ENCODE measurements at regions of chr9 and their contacts with region 1.

Region 1: GRCh38 chr9:127396808-127397497 is at the start of gene SLC2A8:
- DNase-seq: peak; percentile 100
- ATAC-seq: peak; percentile 91
- H3K4me3 ChIP-seq: peak within 1 kb of the TSS; percentile 26 to 77 (median 57)
- H3K4me3 Mint-ChIP-seq: peak within 1 kb of the TSS; percentile 86
- H3K27ac ChIP-seq: peak within 1 kb of the TSS in 1 of 2 donors; percentile 74
- H3K27ac Mint-ChIP-seq: peak within 1 kb of the TSS; percentile 79
- H3K4me1 ChIP-seq: peaks cover 4 to 16% of the 10 kb centered on the region in 2 donors
- H3K4me1 Mint-ChIP-seq: peaks cover 14% of the 10 kb centered on the region
- H3K27me3 ChIP-seq: peaks cover 0 to 7% (median 2%) of the 10 kb centered on the region in 4 experiments
- H3K27me3 Mint-ChIP-seq: no peaks in the 10 kb centered on the region
- CTCF ChIP-seq: peak; percentile 34
- total RNA-seq, gene SLC2A8: 14.2 and 18.7 TPM in 2 replicates

Region 2: GRCh38 chr9:127214421-127215267 is 182.3 kb before region 1 on chr9:
- CTCF ChIA-PET with region 1: interaction called, 16 read pairs
- POLR2A ChIA-PET with region 1: no interaction called
- intact Hi-C with region 1: loop called (anchors 1 kb)
- DNase-seq: peak; percentile 73
- ATAC-seq: peak; percentile 85
- H3K4me3 ChIP-seq: no peak overlapping the region
- H3K4me3 Mint-ChIP-seq: no peak overlapping the region
- H3K27ac ChIP-seq: no peak overlapping the region
- H3K27ac Mint-ChIP-seq: no peak overlapping the region
- H3K4me1 ChIP-seq: peaks cover 0 to 3% of the 10 kb centered on the region in 2 donors
- H3K4me1 Mint-ChIP-seq: peaks cover 4% of the 10 kb centered on the region
- H3K27me3 ChIP-seq: no peaks in the 10 kb centered on the region
- H3K27me3 Mint-ChIP-seq: no peaks in the 10 kb centered on the region
- CTCF ChIP-seq: peak; percentile 85

Region 3: GRCh38 chr9:127244609-127245601 is 152.0 kb before region 1 on chr9:
- CTCF ChIA-PET with region 1: interaction called, 6 read pairs
- POLR2A ChIA-PET with region 1: no interaction called
- intact Hi-C with region 1: loop called (anchors 1 kb)
- DNase-seq: peak; percentile 93
- ATAC-seq: peak; percentile 100
- H3K4me3 ChIP-seq: peak overlapping the region; percentile 50 to 77 (median 66)
- H3K4me3 Mint-ChIP-seq: peak overlapping the region; percentile 94
- H3K27ac ChIP-seq: peak overlapping the region in 1 of 2 donors; percentile 18
- H3K27ac Mint-ChIP-seq: peak overlapping the region; percentile 86
- H3K4me1 ChIP-seq: peaks cover 5 to 11% of the 10 kb centered on the region in 2 donors
- H3K4me1 Mint-ChIP-seq: peaks cover 11% of the 10 kb centered on the region
- H3K27me3 ChIP-seq: peaks cover 0 to 3% (median 0%) of the 10 kb centered on the region in 4 experiments
- H3K27me3 Mint-ChIP-seq: no peaks in the 10 kb centered on the region
- CTCF ChIP-seq: no peak

Region 4: DNA sequence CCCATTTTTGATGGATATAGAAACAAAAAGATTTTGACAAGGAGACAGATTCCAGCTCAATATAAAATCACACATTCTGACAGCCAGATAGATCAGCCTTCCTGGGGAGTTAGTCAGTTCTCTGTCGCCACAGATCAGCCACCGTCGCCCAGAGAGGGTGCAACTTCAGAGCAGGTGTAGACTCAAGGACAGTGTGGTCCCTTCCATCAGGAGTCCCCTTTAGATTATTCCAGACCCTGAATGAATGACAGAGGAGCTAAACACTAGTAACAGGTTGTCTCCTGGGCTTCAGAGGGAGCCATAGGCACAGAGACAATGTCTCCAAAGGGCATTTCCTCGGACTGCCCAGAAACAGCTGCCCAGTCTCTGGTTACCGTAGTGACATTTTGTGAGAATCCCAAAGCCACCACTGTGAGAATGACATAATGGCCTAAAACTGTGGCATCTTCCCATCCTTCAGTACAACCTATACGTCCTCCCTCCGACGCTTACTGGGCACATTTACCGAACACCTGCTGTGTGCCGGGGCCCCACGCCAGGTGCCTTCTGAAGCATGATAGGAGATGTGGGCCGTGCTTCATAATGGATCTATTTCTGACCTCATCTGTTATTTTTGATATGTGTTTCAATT is 47.4 kb before region 1 on chr9:
- CTCF ChIA-PET with region 1: no interaction called
- POLR2A ChIA-PET with region 1: no interaction called
- intact Hi-C with region 1: no loop called
- DNase-seq: no peak
- ATAC-seq: no peak
- H3K4me3 ChIP-seq: no peak overlapping the region
- H3K4me3 Mint-ChIP-seq: no peak overlapping the region
- H3K27ac ChIP-seq: no peak overlapping the region
- H3K27ac Mint-ChIP-seq: no peak overlapping the region
- H3K4me1 ChIP-seq: no peaks in the 10 kb centered on the region
- H3K4me1 Mint-ChIP-seq: no peaks in the 10 kb centered on the region
- H3K27me3 ChIP-seq: peaks cover 0 to 5% (median 0%) of the 10 kb centered on the region in 4 experiments
- H3K27me3 Mint-ChIP-seq: no peaks in the 10 kb centered on the region
- CTCF ChIP-seq: no peak

Region 5: GRCh38 chr9:127611899-127612790 is 215.2 kb after region 1 on chr9 and contains the start of gene STXBP1:
- CTCF ChIA-PET with region 1: no interaction called
- POLR2A ChIA-PET with region 1: no interaction called
- intact Hi-C with region 1: loop called (anchors 2 kb)
- DNase-seq: peak; percentile 91
- ATAC-seq: peak; percentile 94
- H3K4me3 ChIP-seq: peak within 1 kb of the TSS; percentile 55 to 84 (median 60)
- H3K4me3 Mint-ChIP-seq: peak within 1 kb of the TSS; percentile 98
- H3K27ac ChIP-seq: no peak within 1 kb of the TSS
- H3K27ac Mint-ChIP-seq: peak within 1 kb of the TSS; percentile 80
- H3K4me1 ChIP-seq: peaks cover 28 to 31% of the 10 kb centered on the region in 2 donors
- H3K4me1 Mint-ChIP-seq: peaks cover 25% of the 10 kb centered on the region
- H3K27me3 ChIP-seq: peaks cover 0 to 39% (median 33%) of the 10 kb centered on the region in 4 experiments
- H3K27me3 Mint-ChIP-seq: peaks cover 44% of the 10 kb centered on the region
- CTCF ChIP-seq: no peak
- total RNA-seq, gene STXBP1: 0.62 and 0.78 TPM in 2 replicates

Region 6: DNA sequence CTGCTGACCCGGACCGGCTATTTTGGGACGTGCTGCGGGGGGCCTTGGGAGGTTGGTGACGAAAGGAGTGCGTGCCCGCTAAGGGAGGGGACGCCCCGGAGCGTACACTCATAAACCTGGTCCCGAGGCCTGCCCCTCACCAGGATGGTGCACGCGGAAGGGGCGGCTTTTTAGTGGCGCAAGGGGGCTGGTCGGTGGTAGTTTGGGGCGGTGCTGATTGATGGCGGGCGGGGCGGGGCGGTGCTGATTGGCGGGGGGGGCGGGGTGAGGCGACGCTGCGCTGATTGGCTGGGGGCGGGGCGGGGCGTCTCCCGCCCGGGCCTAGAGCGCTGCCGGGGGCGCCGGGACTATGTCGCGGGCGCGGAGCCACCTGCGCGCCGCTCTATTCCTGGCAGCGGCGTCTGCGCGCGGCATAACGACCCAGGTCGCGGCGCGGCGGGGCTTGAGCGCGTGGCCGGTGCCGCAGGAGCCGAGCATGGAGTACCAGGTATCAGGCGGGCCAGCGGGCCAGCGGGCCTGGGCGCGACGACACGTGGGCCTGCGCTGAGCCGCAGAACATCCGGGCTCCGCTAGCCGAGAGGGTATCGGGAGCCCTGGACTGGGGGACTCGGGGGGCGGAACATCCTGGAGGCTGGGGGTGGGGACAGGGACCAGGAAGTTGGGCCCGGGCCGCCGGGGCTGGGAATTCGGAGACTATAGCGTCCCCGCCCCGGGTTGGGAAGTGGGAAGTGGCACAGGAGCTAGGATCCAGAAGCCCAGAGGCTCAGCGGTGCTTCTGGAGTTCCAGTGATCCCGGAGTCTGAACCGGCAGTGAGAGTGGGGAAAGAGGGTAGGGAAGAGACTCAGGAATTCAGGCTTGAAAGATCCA is 405.9 kb after region 1 on chr9 and contains the start of gene FPGS:
- CTCF ChIA-PET with region 1: no interaction called
- POLR2A ChIA-PET with region 1: no interaction called
- intact Hi-C with region 1: loop called (anchors 2 kb)
- DNase-seq: peak; percentile 93
- ATAC-seq: peak; percentile 84
- H3K4me3 ChIP-seq: peak within 1 kb of the TSS; percentile 65 to 96 (median 88)
- H3K4me3 Mint-ChIP-seq: peak within 1 kb of the TSS; percentile 91
- H3K27ac ChIP-seq: peak within 1 kb of the TSS; percentile 68 to 90
- H3K27ac Mint-ChIP-seq: peak within 1 kb of the TSS; percentile 92
- H3K4me1 ChIP-seq: peaks cover 20 to 31% of the 10 kb centered on the region in 2 donors
- H3K4me1 Mint-ChIP-seq: peaks cover 33% of the 10 kb centered on the region
- H3K27me3 ChIP-seq: no peaks in the 10 kb centered on the region
- H3K27me3 Mint-ChIP-seq: no peaks in the 10 kb centered on the region
- CTCF ChIP-seq: no peak
- total RNA-seq, gene FPGS: 136 and 137 TPM in 2 replicates